Right ventricle myocardium inferior (tissue), 1 donor: ENCODE measurements at regions of chr2 and their contacts with region 1.

Region 1: GRCh38 chr2:17538844-17539554 is 1.5 kb upstream of the VSNL1 start:
- DNase-seq: peak; percentile 79
- ATAC-seq: peak; percentile 89

Region 2: DNA sequence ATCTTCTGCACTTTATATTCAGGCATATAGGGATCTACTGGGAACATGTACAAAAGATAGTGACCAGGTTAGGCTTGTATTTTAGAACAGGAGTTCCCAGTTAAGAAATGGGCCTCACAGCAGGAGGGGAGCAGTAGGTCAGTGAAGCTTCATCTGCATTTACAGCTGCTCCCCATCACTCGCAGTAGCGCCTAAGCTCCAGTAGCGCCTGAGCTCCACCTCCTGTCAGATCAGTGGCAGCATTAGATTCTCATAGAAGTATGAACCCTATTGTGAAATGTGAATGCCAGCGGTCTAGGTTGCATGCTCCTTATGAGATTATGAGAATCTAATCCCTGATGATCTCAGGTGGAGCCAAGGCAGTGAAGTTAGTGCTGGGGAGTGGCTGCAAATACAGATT is 648.9 kb before region 1 on chr2:
- intact Hi-C with region 1: no loop called
- DNase-seq: no peak
- ATAC-seq: no peak

Region 3: DNA sequence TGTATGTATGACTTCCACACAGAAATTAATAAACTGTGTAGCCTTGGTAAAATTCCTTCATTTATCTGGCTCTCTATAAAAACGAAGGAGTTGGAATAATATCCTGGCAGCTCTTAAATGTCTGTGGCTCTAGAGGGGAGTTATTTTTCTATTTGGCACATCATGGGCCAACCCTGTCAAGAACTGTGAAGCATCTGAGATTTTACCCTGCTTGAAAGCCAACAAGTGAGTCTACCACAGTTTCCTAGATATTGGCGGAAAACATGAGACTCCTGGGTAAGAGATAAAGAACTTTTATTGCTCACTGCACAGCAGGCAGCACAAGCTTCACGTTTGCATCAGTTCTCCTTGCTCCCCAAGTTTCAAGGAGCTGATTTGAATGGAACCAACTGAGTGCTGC is 526.7 kb before region 1 on chr2:
- intact Hi-C with region 1: no loop called
- DNase-seq: no peak
- ATAC-seq: no peak

Region 4: DNA sequence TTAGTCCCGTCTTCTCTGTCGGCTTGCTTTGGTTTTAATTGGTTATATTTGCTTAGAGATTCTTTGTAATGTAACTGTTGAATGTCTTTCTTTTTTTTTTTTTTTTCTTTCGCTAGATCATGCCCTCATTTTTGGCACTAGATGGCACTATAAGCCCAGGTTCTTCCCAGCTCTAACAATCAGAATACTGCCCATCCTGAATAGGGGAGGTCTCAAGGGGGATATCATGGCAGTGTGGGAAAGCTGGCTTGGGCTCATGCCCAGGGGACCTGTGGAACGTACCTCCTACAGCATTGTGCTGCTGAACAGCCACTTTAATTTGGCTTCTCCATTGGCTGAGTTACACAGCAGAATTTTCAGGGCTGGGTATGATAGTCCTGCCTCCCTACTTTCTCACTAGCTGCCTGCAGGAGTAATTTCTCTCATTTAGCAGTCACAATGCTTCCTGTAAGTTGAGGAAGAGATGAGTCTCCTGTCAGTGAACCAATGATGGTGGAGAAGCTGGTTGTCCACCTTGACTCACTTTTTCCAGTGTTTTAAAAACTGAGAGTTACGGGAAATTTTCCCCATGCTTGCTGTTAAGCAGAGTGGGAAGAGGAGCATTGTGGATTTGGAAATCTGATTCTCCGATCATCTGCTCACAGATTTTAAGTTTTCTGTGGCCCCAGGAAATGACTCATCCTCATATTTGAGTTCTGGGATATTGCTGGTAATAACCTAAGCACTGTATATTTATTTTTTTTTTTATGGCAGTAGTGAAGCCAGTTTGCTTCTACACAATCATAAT is 68.0 kb before region 1 on chr2:
- intact Hi-C with region 1: loop called (anchors 2 kb)
- DNase-seq: no peak
- ATAC-seq: no peak

Region 5: GRCh38 chr2:17476830-17477229 is 62.2 kb before region 1 on chr2:
- intact Hi-C with region 1: loop called (anchors 2 kb)
- DNase-seq: no peak
- ATAC-seq: peak; percentile 39

Region 6: DNA sequence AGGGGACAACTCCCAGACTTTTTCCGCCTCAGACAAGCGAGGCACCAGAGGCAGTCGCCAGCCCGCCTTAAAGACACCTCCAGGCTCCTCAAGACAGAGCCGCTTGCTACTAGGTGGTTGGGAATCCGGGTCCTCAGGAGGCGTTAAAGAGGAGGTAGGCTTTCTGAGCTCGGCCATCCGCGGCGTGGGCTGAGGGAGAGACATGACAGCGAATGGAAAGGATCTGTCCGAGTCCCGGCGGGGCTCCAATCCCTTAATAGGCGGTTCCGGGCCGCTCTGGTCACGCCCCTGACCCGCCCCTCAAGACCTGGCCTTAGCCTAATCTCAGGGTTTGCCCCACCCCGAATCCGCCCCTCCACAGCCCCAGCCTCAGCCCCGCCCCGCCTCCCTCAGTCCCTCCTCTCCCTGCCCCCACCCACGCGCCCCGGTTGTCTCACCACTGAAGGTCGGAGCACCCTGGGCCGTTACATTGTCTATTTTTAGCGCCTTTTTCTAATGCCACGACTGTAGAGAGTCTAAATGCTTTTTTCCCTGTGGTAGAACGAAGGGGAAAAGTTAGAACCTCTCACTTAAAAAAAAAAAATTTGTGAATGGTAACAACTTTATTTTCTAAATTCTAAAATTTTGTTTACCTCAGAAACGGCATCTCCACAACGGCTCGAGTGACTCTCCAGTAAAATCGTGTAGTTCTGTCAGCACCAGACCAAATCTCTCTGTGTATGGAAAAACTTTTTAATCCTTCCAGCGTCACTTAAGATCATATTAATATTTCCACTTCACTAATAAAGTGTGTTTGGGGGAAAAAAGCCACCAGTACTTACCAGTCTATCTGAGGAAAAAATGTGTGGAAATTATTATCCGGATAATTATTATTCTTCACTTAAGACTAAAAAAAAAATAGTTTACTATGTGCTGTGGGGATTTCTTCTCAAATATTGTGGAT is 20.5 kb before region 1 on chr2 and contains the start of gene RAD51AP2:
- intact Hi-C with region 1: loop called (anchors 2 kb)
- DNase-seq: peak; percentile 89
- ATAC-seq: peak; percentile 100
- total RNA-seq, gene RAD51AP2: 0.11 TPM

Region 7: GRCh38 chr2:17610521-17610920 is 71.5 kb after region 1 on chr2:
- intact Hi-C with region 1: loop called (anchors 5 kb)
- DNase-seq: no peak
- ATAC-seq: peak; percentile 93

Region 8: GRCh38 chr2:17646081-17646554 is 107.1 kb after region 1 on chr2:
- intact Hi-C with region 1: loop called (anchors 10 kb)
- DNase-seq: no peak
- ATAC-seq: peak; percentile 60

Region 9: DNA sequence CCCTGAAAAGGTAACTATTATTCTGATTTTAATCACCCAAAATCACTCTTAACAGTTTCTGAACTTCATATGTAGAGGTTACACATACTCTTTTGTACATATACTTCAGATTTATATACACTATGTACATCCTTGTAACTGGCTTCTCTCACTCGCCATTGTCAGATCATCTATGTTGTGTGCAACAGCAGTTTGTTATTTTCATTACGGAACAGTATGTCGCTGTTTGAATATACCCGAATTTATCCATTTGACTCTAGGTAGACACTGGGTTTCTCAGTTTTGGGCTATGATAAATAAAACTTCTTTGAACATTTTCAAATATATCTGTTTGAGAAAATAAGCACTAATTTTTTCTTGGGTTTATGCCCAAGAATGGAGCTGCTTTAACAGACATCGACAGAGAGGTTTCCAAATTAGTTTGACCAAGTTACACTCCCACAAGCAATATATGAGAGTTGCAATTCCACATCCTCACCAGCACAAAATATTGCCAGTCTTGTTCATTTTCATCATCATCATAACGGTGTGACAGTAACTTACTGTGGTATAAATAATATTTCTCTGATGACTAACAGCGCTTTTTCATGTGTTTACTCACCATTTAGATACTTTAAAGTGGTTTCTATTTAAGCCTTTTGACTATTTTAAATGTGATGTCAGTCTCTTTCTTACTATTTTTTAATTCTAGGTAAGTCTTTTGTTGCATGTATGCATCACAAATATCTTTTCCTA is 133.8 kb after region 1 on chr2:
- intact Hi-C with region 1: loop called (anchors 5 kb)
- DNase-seq: no peak
- ATAC-seq: no peak